Naive thymus-derived CD4-positive, alpha-beta T cell (primary cell): ENCODE measurements at regions of chr11 and their contacts with region 1.

Region 1: DNA sequence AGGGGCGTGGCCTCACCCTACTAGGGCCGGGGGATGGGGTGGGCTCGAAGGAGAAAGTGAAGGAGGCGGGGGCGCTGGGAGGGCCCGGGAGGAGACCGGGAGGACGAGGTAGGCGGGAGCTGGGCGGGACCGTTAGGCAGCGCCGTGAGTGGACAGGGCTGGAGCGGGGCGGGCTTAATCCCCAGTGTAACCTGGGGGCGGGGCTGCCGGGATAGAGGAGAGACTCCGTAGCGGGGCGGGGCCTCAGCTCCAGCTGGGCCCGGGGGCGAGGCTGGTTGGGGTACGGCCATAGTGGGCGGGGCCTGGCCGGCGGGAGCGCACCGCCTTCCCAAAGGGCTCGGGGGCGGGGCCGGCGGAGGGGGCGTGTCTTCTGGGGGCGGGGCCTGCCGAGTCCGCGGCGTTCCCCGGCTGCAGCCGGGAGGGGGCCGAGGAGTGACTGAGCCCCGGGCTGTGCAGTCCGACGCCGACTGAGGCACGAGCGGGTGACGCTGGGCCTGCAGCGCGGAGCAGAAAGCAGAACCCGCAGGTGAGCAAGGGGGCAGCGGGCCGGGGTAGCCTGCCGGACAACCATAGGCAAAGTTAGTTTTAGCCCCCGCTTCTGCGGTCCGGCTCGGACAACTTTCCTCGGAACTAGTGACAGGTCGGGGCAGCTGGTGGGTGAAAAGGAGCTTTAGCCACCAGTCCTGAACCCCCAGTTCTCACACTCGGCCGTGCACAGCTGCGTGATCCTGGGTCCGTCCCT is at the start of gene CD82:
- DNase-seq: peak; percentile 86 to 100 (median 92)
- ATAC-seq: peak; percentile 88
- H3K4me3 ChIP-seq: peak within 1 kb of the TSS; percentile 80
- H3K4me3 Mint-ChIP-seq: peak within 1 kb of the TSS; percentile 82 to 92 (median 88)
- H3K27ac ChIP-seq: peak within 1 kb of the TSS; percentile 72
- H3K27ac Mint-ChIP-seq: peak within 1 kb of the TSS; percentile 48 to 90 (median 85)
- H3K4me1 ChIP-seq: peaks cover 46% of the 10 kb centered on the region in 2 donors
- H3K4me1 Mint-ChIP-seq: peaks cover 31 to 69% (median 56%) of the 10 kb centered on the region in 7 donors
- H3K27me3 ChIP-seq: no peaks in the 10 kb centered on the region
- H3K27me3 Mint-ChIP-seq: no peaks in the 10 kb centered on the region
- total RNA-seq, gene CD82: 37.0 to 319 (median 57.2) TPM

Region 2: GRCh38 chr11:44065841-44066731 is 499.3 kb before region 1 on chr11 and contains the start of gene ACCS:
- CTCF ChIA-PET with region 1: no interaction called
- POLR2A ChIA-PET with region 1: no interaction called
- intact Hi-C with region 1: loop called (anchors 1 kb)
- DNase-seq: peak; percentile 80 to 91 (median 88)
- ATAC-seq: peak; percentile 98
- H3K4me3 ChIP-seq: peak within 1 kb of the TSS; percentile 88
- H3K4me3 Mint-ChIP-seq: peak within 1 kb of the TSS; percentile 79 to 97 (median 94)
- H3K27ac ChIP-seq: peak within 1 kb of the TSS; percentile 87
- H3K27ac Mint-ChIP-seq: peak within 1 kb of the TSS; percentile 84 to 97 (median 94)
- H3K4me1 ChIP-seq: peaks cover 6 to 12% of the 10 kb centered on the region in 2 donors
- H3K4me1 Mint-ChIP-seq: peaks cover 12 to 53% (median 26%) of the 10 kb centered on the region in 7 donors
- H3K27me3 ChIP-seq: no peaks in the 10 kb centered on the region
- H3K27me3 Mint-ChIP-seq: no peaks in the 10 kb centered on the region
- total RNA-seq, gene ACCS: 25.1 to 79.2 (median 57.6) TPM

Region 3: GRCh38 chr11:44388828-44389657 is 176.3 kb before region 1 on chr11:
- CTCF ChIA-PET with region 1: no interaction called
- POLR2A ChIA-PET with region 1: no interaction called
- intact Hi-C with region 1: no loop called
- DNase-seq: no peak
- ATAC-seq: no peak
- H3K4me3 ChIP-seq: no peak overlapping the region
- H3K4me3 Mint-ChIP-seq: peak overlapping the region in 1 of 10 donors; percentile 32
- H3K27ac ChIP-seq: no peak overlapping the region
- H3K27ac Mint-ChIP-seq: no peak overlapping the region
- H3K4me1 ChIP-seq: no peaks in the 10 kb centered on the region
- H3K4me1 Mint-ChIP-seq: peaks cover 0 to 3% (median 0%) of the 10 kb centered on the region in 7 donors
- H3K27me3 ChIP-seq: no peaks in the 10 kb centered on the region
- H3K27me3 Mint-ChIP-seq: peaks cover 17 to 42% (median 32%) of the 10 kb centered on the region in 5 donors

Region 4: GRCh38 chr11:44611687-44612434 is 46.5 kb after region 1 on chr11:
- CTCF ChIA-PET with region 1: interaction called, 379 read pairs
- POLR2A ChIA-PET with region 1: interaction called, 42 read pairs
- intact Hi-C with region 1: loop called (anchors 1 to 2 kb)
- DNase-seq: peak in 8 of 9 donors; percentile 35 to 57 (median 48)
- ATAC-seq: peak; percentile 82
- H3K4me3 ChIP-seq: no peak overlapping the region
- H3K4me3 Mint-ChIP-seq: peak overlapping the region in 9 of 10 donors; percentile 27 to 69 (median 60)
- H3K27ac ChIP-seq: peak overlapping the region; percentile 54
- H3K27ac Mint-ChIP-seq: peak overlapping the region; percentile 75 to 91 (median 89)
- H3K4me1 ChIP-seq: peaks cover 60 to 78% of the 10 kb centered on the region in 2 donors
- H3K4me1 Mint-ChIP-seq: peaks cover 40 to 96% (median 83%) of the 10 kb centered on the region in 7 donors
- H3K27me3 ChIP-seq: no peaks in the 10 kb centered on the region
- H3K27me3 Mint-ChIP-seq: no peaks in the 10 kb centered on the region

Region 5: GRCh38 chr11:44727373-44728287 is 162.2 kb after region 1 on chr11:
- CTCF ChIA-PET with region 1: no interaction called
- POLR2A ChIA-PET with region 1: no interaction called
- intact Hi-C with region 1: loop called (anchors 1 to 5 kb)
- DNase-seq: peak; percentile 68 to 87 (median 80)
- ATAC-seq: peak; percentile 88
- H3K4me3 ChIP-seq: peak overlapping the region; percentile 72
- H3K4me3 Mint-ChIP-seq: peak overlapping the region; percentile 73 to 95 (median 90)
- H3K27ac ChIP-seq: peak overlapping the region; percentile 71
- H3K27ac Mint-ChIP-seq: peak overlapping the region; percentile 37 to 91 (median 76)
- H3K4me1 ChIP-seq: peaks cover 10 to 31% of the 10 kb centered on the region in 2 donors
- H3K4me1 Mint-ChIP-seq: peaks cover 35 to 61% (median 56%) of the 10 kb centered on the region in 7 donors
- H3K27me3 ChIP-seq: peaks cover 0 to 3% of the 10 kb centered on the region in 2 donors
- H3K27me3 Mint-ChIP-seq: peaks cover 0 to 38% (median 0%) of the 10 kb centered on the region in 5 donors

Region 6: GRCh38 chr11:45102810-45103621 is 537.6 kb after region 1 on chr11:
- CTCF ChIA-PET with region 1: no interaction called
- POLR2A ChIA-PET with region 1: no interaction called
- intact Hi-C with region 1: loop called in 1 of 2 experiments (anchors 5 kb)
- DNase-seq: peak; percentile 33 to 69 (median 61)
- ATAC-seq: peak; percentile 85
- H3K4me3 ChIP-seq: peak overlapping the region; percentile 6
- H3K4me3 Mint-ChIP-seq: peak overlapping the region in 3 of 10 donors; percentile 35 to 82 (median 71)
- H3K27ac ChIP-seq: no peak overlapping the region
- H3K27ac Mint-ChIP-seq: peak overlapping the region in 4 of 9 donors; percentile 1 to 87 (median 72)
- H3K4me1 ChIP-seq: peaks cover 8 to 13% of the 10 kb centered on the region in 2 donors
- H3K4me1 Mint-ChIP-seq: peaks cover 8 to 24% (median 12%) of the 10 kb centered on the region in 7 donors
- H3K27me3 ChIP-seq: no peaks in the 10 kb centered on the region
- H3K27me3 Mint-ChIP-seq: peaks cover 0 to 24% (median 15%) of the 10 kb centered on the region in 5 donors

Region 7: GRCh38 chr11:45804761-45805304 is 1239.5 kb after region 1 on chr11 and contains the start of gene SLC35C1:
- CTCF ChIA-PET with region 1: no interaction called
- POLR2A ChIA-PET with region 1: no interaction called
- intact Hi-C with region 1: loop called in 1 of 2 experiments (anchors 2 kb)
- DNase-seq: peak; percentile 89 to 97 (median 93)
- ATAC-seq: peak; percentile 99
- H3K4me3 ChIP-seq: peak within 1 kb of the TSS; percentile 95
- H3K4me3 Mint-ChIP-seq: peak within 1 kb of the TSS; percentile 86 to 99 (median 92)
- H3K27ac ChIP-seq: peak within 1 kb of the TSS; percentile 87
- H3K27ac Mint-ChIP-seq: peak within 1 kb of the TSS; percentile 61 to 94 (median 91)
- H3K4me1 ChIP-seq: peaks cover 27 to 29% of the 10 kb centered on the region in 2 donors
- H3K4me1 Mint-ChIP-seq: peaks cover 31 to 43% (median 40%) of the 10 kb centered on the region in 7 donors
- H3K27me3 ChIP-seq: no peaks in the 10 kb centered on the region
- H3K27me3 Mint-ChIP-seq: no peaks in the 10 kb centered on the region
- total RNA-seq, gene SLC35C1: 7.9 to 22.8 (median 14.2) TPM